PC-9 (cell line): ENCODE measurements at regions of chr11 and their contacts with region 1.

Region 1: DNA sequence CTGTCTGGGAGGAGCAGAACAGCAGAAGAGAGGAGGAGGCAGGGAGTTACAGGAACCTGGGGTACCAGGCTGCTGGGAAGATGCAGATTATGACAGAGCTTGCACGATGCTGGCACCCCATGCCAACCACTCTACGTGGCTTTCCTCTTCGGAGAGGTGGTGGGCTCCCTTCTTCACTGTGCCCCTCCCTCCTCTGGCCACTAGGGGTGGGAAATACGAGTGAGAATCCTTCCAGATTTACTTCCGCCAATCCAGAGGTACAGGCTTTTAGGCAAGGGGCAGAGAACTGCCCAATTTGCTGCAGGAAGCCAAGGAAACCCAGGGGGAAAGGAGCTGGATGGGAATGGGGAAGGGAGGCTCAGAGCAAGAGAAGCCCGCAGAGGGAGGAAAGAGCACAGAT is 12.3 kb downstream of the HYOU1 start:
- DNase-seq: peak in 1 of 2 experiments; percentile 21
- H3K4me3 ChIP-seq: no peak overlapping the region
- H3K27ac ChIP-seq: no peak overlapping the region
- H3K4me1 ChIP-seq: no peaks in the 10 kb centered on the region
- H3K27me3 ChIP-seq: no peaks in the 10 kb centered on the region
- CTCF ChIP-seq: peak; percentile 47

Region 2: GRCh38 chr11:118076754-118077281 is 967.9 kb before region 1 on chr11 and contains the start of gene TMPRSS4:
- CTCF ChIA-PET with region 1: interaction called, 15 read pairs
- POLR2A ChIA-PET with region 1: no interaction called
- intact Hi-C with region 1: no loop called
- DNase-seq: peak; percentile 74 to 99
- H3K4me3 ChIP-seq: peak within 1 kb of the TSS; percentile 7; the same call in 1 of the 2 replicates
- H3K27ac ChIP-seq: peak within 1 kb of the TSS; percentile 30
- H3K4me1 ChIP-seq: peaks cover 41% of the 10 kb centered on the region
- H3K27me3 ChIP-seq: no peaks in the 10 kb centered on the region
- CTCF ChIP-seq: no peak
- total RNA-seq, gene TMPRSS4: 18.7 and 27.6 TPM in 2 replicates

Region 3: DNA sequence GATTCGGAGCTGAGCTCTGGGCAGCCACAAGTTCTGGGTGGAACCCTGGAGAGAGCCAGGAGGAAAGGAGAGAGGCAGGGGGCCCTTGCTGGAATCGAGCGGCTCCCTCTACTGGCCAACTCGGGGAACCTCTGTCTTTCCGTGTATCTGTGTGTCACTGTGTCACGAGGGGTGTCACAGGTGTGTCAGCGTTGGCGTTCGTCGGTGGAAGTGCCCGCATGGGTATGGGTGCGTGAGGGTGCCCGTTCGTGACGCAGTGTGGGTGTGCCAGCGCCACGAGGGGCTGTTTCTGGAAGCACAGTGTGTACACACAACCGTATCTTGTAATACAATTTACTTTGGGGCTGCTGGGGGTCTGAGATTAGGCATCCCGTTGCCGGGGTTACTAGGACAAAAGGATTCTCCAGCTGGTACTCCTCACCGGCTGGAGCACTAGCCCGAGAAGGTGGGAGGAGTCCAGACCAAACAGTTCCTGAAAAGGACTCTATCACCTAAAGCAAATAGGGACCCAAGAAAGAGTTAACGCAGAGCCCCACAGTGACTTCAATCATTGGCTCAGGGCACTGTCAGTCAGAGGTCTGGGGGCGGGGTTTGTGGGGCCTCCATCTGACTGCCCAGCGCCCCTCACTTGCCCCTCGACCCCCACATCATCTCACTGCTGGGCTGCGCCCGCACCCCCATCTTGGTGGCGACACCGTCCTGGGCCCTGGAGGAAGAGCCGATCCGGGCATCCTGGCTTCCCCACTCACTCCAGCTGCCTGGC is 116.4 kb before region 1 on chr11:
- CTCF ChIA-PET with region 1: no interaction called
- POLR2A ChIA-PET with region 1: no interaction called
- intact Hi-C with region 1: no loop called
- DNase-seq: peak; percentile 91 to 97
- H3K4me3 ChIP-seq: peak overlapping the region; percentile 84
- H3K27ac ChIP-seq: peak overlapping the region; percentile 64
- H3K4me1 ChIP-seq: peaks cover 32% of the 10 kb centered on the region
- H3K27me3 ChIP-seq: no peaks in the 10 kb centered on the region
- CTCF ChIP-seq: peak; percentile 99